ENCODE measurements at regions of chr20 and their contacts with region 1.

Region 1: GRCh38 chr20:58188527-58188926 is 39.9 kb downstream of the ANKRD60 start:
- DNase-seq: no peak
- ATAC-seq: peak; percentile 24
- H3K4me3 ChIP-seq: no peak overlapping the region
- H3K4me1 ChIP-seq: no peaks in the 10 kb centered on the region
- CTCF ChIP-seq: no peak

Region 2: GRCh38 chr20:58021453-58021850 is 167.1 kb before region 1 on chr20:
- intact Hi-C with region 1: loop called in 1 of 2 experiments (anchors 5 kb)
- DNase-seq: no peak
- ATAC-seq: no peak
- H3K4me3 ChIP-seq: no peak overlapping the region
- H3K4me1 ChIP-seq: peaks cover 5% of the 10 kb centered on the region
- CTCF ChIP-seq: no peak

Region 3: DNA sequence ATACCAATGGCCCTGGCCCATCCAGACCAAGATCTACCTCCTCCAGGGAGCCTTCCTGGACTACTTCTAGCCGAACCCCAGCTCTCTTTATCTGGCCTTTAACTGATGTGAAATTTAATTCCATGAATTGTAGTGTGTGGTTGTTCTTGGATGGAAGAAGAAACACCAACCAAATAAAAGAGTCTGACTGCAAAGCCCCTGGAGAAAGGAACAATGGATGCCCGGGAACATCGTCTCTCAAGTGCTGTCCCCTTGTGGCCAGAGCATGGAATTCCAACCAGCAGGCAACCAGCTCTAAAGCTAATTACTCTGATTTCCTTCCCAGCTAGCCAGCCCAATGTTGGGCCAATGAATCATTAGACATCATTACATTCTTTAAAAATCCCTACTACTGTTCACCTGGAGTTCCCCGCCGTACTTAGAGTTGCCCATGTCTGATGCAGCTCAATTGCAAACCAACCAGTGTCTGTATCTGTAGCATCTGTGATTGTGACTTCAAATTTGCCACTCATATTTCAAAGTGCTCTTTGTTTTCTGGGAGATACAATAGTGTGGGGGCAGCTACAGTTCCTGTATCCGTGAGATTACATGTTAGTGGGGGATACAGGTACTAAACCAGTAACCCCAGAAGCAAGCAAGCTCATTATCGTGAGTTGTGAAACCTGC is 101.2 kb before region 1 on chr20:
- intact Hi-C with region 1: no loop called
- DNase-seq: peak in 2 of 3 donors; percentile 43 to 51
- ATAC-seq: peak; percentile 78
- H3K4me3 ChIP-seq: no peak overlapping the region
- H3K4me1 ChIP-seq: no peaks in the 10 kb centered on the region
- CTCF ChIP-seq: peak; percentile 70